ENCODE measurements at regions of chr15 and their contacts with region 1.

Region 1: GRCh38 chr15:90839187-90840071 is 29.0 kb upstream of the FURIN start:
- DNase-seq: peak in 1 of 2 donors; percentile 40
- ATAC-seq: no peak
- H3K4me3 ChIP-seq: no peak overlapping the region
- H3K4me3 Mint-ChIP-seq: peak overlapping the region; percentile 9
- H3K27ac ChIP-seq: no peak overlapping the region
- H3K27ac Mint-ChIP-seq: peak overlapping the region; percentile 95
- H3K4me1 ChIP-seq: peaks cover 40% of the 10 kb centered on the region
- H3K4me1 Mint-ChIP-seq: peaks cover 23% of the 10 kb centered on the region in 2 donors
- H3K27me3 ChIP-seq: no peaks in the 10 kb centered on the region
- H3K27me3 Mint-ChIP-seq: no peaks in the 10 kb centered on the region
- CTCF ChIP-seq: no peak

Region 2: DNA sequence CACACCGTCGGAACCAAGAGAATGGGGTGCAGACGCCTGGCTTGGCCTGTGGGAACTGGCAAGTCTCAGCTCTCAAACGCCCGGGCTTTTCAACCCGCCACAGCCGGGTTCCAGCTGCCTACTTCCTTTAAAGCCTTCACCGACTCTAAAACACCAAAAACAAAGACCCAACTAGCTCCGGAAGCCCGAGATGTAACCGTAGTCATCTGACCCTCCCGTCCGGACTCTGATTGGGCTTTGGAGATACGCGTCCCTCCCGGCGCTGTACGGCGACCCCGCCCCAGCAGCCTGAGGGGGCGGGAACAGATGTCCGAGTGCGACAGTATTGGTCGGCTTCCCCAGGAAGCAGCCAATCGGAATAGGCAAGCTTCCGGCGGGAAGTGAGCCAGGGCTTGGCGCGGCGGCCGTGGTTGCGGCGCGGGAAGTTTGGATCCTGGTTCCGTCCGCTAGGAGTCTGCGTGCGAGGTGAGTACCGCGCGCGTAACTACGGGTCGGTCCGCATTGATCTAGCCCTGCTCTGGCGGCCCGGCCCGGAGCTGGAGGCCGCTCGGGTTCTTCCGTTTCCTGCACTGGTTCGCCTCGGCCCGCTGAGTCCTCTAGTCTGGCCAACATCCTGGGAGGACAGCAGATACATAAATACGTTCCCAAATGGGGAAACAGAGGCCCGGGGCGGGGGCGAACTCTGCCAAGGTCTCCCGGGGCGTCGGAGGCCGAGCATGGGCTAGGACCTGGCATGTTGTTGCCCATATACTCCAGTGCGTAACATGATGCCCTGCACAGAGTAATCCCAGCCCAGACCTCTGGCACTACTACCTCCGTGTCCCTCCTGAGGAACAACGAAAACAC is 122.2 kb before region 1 on chr15 and contains the start of gene BLM:
- intact Hi-C with region 1: loop called (anchors 2 kb)
- DNase-seq: peak; percentile 91 to 98
- ATAC-seq: peak; percentile 98 to 100 (median 99)
- H3K4me3 ChIP-seq: peak within 1 kb of the TSS; percentile 92
- H3K4me3 Mint-ChIP-seq: peak within 1 kb of the TSS; percentile 98
- H3K27ac ChIP-seq: peak within 1 kb of the TSS; percentile 82
- H3K27ac Mint-ChIP-seq: peak within 1 kb of the TSS; percentile 95 to 97
- H3K4me1 ChIP-seq: peaks cover 5% of the 10 kb centered on the region
- H3K4me1 Mint-ChIP-seq: peaks cover 37 to 39% of the 10 kb centered on the region in 2 donors
- H3K27me3 ChIP-seq: no peaks in the 10 kb centered on the region
- H3K27me3 Mint-ChIP-seq: no peaks in the 10 kb centered on the region
- CTCF ChIP-seq: no peak
- total RNA-seq, gene BLM: 9.9 to 15.9 (median 14.1) TPM

Region 3: GRCh38 chr15:90807074-90807785 is 32.2 kb before region 1 on chr15:
- intact Hi-C with region 1: no loop called
- DNase-seq: no peak
- ATAC-seq: peak in 1 of 3 donors; percentile 34
- H3K4me3 ChIP-seq: no peak overlapping the region
- H3K4me3 Mint-ChIP-seq: no peak overlapping the region
- H3K27ac ChIP-seq: peak overlapping the region; percentile 4
- H3K27ac Mint-ChIP-seq: peak overlapping the region; percentile 12 to 15
- H3K4me1 ChIP-seq: peaks cover 17% of the 10 kb centered on the region
- H3K4me1 Mint-ChIP-seq: peaks cover 14 to 27% of the 10 kb centered on the region in 2 donors
- H3K27me3 ChIP-seq: no peaks in the 10 kb centered on the region
- H3K27me3 Mint-ChIP-seq: no peaks in the 10 kb centered on the region
- CTCF ChIP-seq: no peak

Region 4: DNA sequence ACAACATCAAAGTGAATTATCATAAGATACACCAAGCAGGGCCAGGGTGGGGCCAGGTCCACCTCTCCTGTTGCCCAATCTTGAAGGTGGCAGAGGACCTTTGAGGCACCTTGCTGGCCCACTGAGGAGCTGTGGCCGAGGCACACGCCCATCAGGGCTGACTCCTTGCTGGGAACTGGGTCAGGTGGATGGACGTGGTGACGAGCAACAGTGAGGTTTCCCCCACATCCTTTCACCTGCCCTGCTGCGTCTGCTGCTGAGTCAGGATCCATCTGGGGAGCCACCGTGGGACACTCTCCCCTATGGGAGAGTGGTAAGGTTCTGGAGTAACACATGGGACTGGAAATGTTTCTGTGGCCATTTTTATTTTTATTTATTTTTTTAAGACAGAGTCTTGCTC is 11.7 kb after region 1 on chr15:
- intact Hi-C with region 1: loop called (anchors 1 kb)
- DNase-seq: peak in 1 of 2 donors; percentile 68
- ATAC-seq: peak; percentile 24 to 51 (median 42)
- H3K4me3 ChIP-seq: no peak overlapping the region
- H3K4me3 Mint-ChIP-seq: peak overlapping the region; percentile 76
- H3K27ac ChIP-seq: no peak overlapping the region
- H3K27ac Mint-ChIP-seq: peak overlapping the region; percentile 80 to 85
- H3K4me1 ChIP-seq: peaks cover 57% of the 10 kb centered on the region
- H3K4me1 Mint-ChIP-seq: peaks cover 35 to 46% of the 10 kb centered on the region in 2 donors
- H3K27me3 ChIP-seq: no peaks in the 10 kb centered on the region
- H3K27me3 Mint-ChIP-seq: peaks cover 0 to 2% of the 10 kb centered on the region in 2 donors
- CTCF ChIP-seq: no peak

Region 5: GRCh38 chr15:90860942-90861675 is 21.7 kb after region 1 on chr15:
- intact Hi-C with region 1: loop called (anchors 1 kb)
- DNase-seq: no peak
- ATAC-seq: no peak
- H3K4me3 ChIP-seq: no peak overlapping the region
- H3K4me3 Mint-ChIP-seq: no peak overlapping the region
- H3K27ac ChIP-seq: no peak overlapping the region
- H3K27ac Mint-ChIP-seq: no peak overlapping the region
- H3K4me1 ChIP-seq: peaks cover 31% of the 10 kb centered on the region
- H3K4me1 Mint-ChIP-seq: peaks cover 16 to 23% of the 10 kb centered on the region in 2 donors
- H3K27me3 ChIP-seq: no peaks in the 10 kb centered on the region
- H3K27me3 Mint-ChIP-seq: no peaks in the 10 kb centered on the region
- CTCF ChIP-seq: no peak

Region 6: DNA sequence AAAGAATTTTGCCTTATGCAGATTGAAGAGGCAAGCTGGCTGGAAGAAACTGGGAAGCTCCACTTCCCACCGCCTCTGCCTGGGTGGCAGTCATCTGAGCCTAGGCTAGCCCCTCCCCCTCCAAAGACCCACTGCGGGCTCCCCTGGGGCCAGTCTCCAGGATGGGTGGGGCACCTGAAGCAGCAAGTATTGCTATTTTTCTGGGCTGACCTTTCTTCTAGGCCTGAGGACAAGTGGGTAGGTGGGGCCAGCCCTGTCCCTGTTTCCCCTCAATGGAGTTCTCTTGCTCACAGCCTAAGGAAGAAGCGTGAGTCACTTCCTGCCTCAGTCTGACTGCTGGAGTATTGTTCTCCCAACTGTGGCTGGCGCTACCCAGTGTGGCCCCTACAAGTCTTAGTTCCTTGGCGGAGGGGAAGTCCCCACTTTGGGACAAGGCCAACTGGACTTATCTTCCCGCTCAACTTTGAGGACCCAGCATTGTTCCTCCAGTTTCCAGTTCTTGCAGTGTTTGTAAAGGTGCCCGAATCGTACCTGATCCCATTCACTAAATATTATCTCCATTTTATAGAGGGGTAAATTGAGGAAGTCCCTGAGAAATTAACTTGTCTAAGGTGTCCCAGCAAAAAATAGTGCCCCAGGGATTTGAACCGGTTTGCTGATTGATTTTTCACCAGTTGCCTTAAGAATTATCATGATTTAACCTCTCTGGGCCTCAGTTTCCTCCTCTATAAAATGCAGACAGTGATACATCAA is 30.3 kb after region 1 on chr15:
- intact Hi-C with region 1: loop called (anchors 5 kb)
- DNase-seq: peak in 1 of 2 donors; percentile 58
- ATAC-seq: peak in 2 of 3 donors; percentile 17 to 21
- H3K4me3 ChIP-seq: no peak overlapping the region
- H3K4me3 Mint-ChIP-seq: peak overlapping the region; percentile 97
- H3K27ac ChIP-seq: peak overlapping the region; percentile 48
- H3K27ac Mint-ChIP-seq: peak overlapping the region; percentile 90 to 93
- H3K4me1 ChIP-seq: peaks cover 45% of the 10 kb centered on the region
- H3K4me1 Mint-ChIP-seq: peaks cover 27 to 50% of the 10 kb centered on the region in 2 donors
- H3K27me3 ChIP-seq: no peaks in the 10 kb centered on the region
- H3K27me3 Mint-ChIP-seq: no peaks in the 10 kb centered on the region
- CTCF ChIP-seq: no peak